ENCODE measurements at regions of chr12 and their contacts with region 1.

Region 1: GRCh38 chr12:92943482-92944250 is 14.6 kb upstream of the EEA1 start:
- DNase-seq: no peak
- ATAC-seq: no peak
- H3K4me3 ChIP-seq: no peak overlapping the region
- H3K27ac ChIP-seq: no peak overlapping the region
- H3K4me1 ChIP-seq: peaks cover 0 to 4% (median 0%) of the 10 kb centered on the region in 9 donors
- H3K27me3 ChIP-seq: no peaks in the 10 kb centered on the region
- CTCF ChIP-seq: peak in 2 of 9 donors; percentile 25 to 36

Region 2: DNA sequence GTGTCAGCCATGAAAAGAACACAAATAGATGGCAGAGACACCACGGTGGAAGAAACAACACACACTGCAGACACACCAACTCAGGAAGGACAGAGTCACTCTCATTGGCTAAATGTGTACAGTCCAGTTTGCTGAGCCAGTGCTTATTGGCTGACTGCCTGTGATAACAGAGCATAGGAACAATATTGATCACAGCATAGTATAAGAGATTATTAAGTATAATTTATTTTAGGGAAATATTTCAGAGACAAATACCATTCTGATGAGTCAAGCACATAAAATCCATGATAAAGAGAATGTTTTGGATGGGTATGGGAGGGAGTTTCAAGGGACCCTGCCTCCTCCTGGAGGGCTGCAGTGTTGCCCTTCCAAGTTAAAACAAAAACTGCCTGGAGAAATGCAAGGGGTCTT is 848.9 kb before region 1 on chr12:
- intact Hi-C with region 1: loop called in 1 of 10 experiments (anchors 10 kb)
- DNase-seq: no peak
- ATAC-seq: no peak
- H3K4me3 ChIP-seq: no peak overlapping the region
- H3K27ac ChIP-seq: no peak overlapping the region
- H3K4me1 ChIP-seq: peaks cover 0 to 19% (median 0%) of the 10 kb centered on the region in 9 donors
- H3K27me3 ChIP-seq: no peaks in the 10 kb centered on the region
- CTCF ChIP-seq: no peak

Measured in heart right ventricle (tissue), 16 donors.